B cell (primary cell): ENCODE measurements at regions of chr14 and their contacts with region 1.

Region 1: GRCh38 chr14:65195042-65195719 is 92.9 kb upstream of the MAX start:
- DNase-seq: peak; percentile 36
- ATAC-seq: peak; percentile 76
- H3K4me3 ChIP-seq: peak overlapping the region in 4 of 5 experiments; percentile 0 to 42 (median 28)
- H3K4me3 Mint-ChIP-seq: peak overlapping the region; percentile 84
- H3K27ac ChIP-seq: peak overlapping the region; percentile 29 to 35
- H3K27ac Mint-ChIP-seq: peak overlapping the region; percentile 91
- H3K4me1 ChIP-seq: peaks cover 19 to 23% of the 10 kb centered on the region in 2 donors
- H3K4me1 Mint-ChIP-seq: peaks cover 44% of the 10 kb centered on the region
- H3K27me3 ChIP-seq: no peaks in the 10 kb centered on the region
- H3K27me3 Mint-ChIP-seq: no peaks in the 10 kb centered on the region
- CTCF ChIP-seq: no peak

Region 2: DNA sequence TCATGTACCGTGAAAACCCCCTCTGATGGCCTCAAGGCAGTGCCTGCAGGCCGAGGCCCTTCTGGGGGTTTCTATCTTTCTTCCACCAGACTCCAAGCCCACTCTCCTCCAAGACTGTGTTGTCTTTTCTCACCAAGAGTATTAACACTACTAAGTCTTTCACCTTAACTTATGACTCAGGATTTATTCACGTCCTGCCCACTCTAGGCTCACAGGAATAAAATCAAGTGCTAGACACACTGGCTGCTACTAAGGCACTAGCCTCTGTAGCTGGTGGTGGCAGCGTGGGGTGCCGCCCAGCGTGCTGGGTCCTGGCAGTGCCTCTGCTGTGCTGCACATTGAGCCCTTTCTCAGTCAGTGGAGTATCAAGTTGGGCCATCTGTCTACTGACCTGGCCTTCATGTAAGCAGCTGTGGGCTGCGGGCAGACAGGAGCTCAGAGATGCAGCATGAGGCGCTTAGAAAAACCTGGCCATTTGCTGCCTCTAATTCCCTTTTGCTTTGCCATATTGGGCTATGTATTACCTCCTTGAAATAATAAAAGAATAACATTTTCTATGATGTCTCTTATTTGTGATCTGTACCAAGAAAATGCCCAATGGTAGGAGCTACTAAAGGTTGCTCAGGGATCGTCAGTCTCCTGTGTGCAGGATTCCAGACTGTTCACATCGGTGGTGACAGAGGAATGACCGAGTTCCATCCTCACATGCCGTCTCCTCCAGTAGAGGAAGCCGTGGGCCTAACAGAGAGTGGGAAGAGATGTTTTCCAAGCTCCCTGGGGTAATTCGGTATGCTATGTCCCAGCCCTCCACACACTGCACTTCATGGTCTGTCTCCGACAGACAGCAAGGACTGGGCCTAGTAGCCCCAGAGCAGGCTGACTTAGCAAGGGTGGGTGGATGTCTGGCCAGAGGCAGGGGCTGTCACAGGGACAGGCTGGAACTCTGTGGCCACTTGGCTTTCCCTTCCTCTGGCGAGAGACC is 132.8 kb before region 1 on chr14:
- CTCF ChIA-PET with region 1: no interaction called
- POLR2A ChIA-PET with region 1: no interaction called
- intact Hi-C with region 1: no loop called
- DNase-seq: no peak
- ATAC-seq: no peak
- H3K4me3 ChIP-seq: no peak overlapping the region
- H3K4me3 Mint-ChIP-seq: no peak overlapping the region
- H3K27ac ChIP-seq: no peak overlapping the region
- H3K27ac Mint-ChIP-seq: no peak overlapping the region
- H3K4me1 ChIP-seq: no peaks in the 10 kb centered on the region
- H3K4me1 Mint-ChIP-seq: no peaks in the 10 kb centered on the region
- H3K27me3 ChIP-seq: no peaks in the 10 kb centered on the region
- H3K27me3 Mint-ChIP-seq: no peaks in the 10 kb centered on the region
- CTCF ChIP-seq: no peak

Region 3: GRCh38 chr14:65179918-65180724 is 15.1 kb before region 1 on chr14:
- CTCF ChIA-PET with region 1: interaction called, 16 read pairs
- POLR2A ChIA-PET with region 1: interaction called, 3 read pairs
- intact Hi-C with region 1: no loop called
- DNase-seq: peak; percentile 79
- ATAC-seq: peak; percentile 93
- H3K4me3 ChIP-seq: peak overlapping the region in 1 of 5 experiments; percentile 15
- H3K4me3 Mint-ChIP-seq: peak overlapping the region; percentile 55
- H3K27ac ChIP-seq: peak overlapping the region in 1 of 2 donors; percentile 72
- H3K27ac Mint-ChIP-seq: peak overlapping the region; percentile 76
- H3K4me1 ChIP-seq: peaks cover 14 to 15% of the 10 kb centered on the region in 2 donors
- H3K4me1 Mint-ChIP-seq: peaks cover 29% of the 10 kb centered on the region
- H3K27me3 ChIP-seq: no peaks in the 10 kb centered on the region
- H3K27me3 Mint-ChIP-seq: no peaks in the 10 kb centered on the region
- CTCF ChIP-seq: no peak

Region 4: GRCh38 chr14:65373679-65374039 is 178.5 kb after region 1 on chr14:
- CTCF ChIA-PET with region 1: no interaction called
- POLR2A ChIA-PET with region 1: no interaction called
- intact Hi-C with region 1: no loop called
- DNase-seq: no peak
- ATAC-seq: no peak
- H3K4me3 ChIP-seq: no peak overlapping the region
- H3K4me3 Mint-ChIP-seq: no peak overlapping the region
- H3K27ac ChIP-seq: no peak overlapping the region
- H3K27ac Mint-ChIP-seq: no peak overlapping the region
- H3K4me1 ChIP-seq: peaks cover 0 to 10% of the 10 kb centered on the region in 2 donors
- H3K4me1 Mint-ChIP-seq: peaks cover 21% of the 10 kb centered on the region
- H3K27me3 ChIP-seq: no peaks in the 10 kb centered on the region
- H3K27me3 Mint-ChIP-seq: no peaks in the 10 kb centered on the region
- CTCF ChIP-seq: no peak